ENCODE measurements at regions of chr3 and their contacts with region 1.

Region 1: GRCh38 chr3:187164885-187165543 is 25.7 kb upstream of the RPL39L start:
- DNase-seq: peak in 1 of 3 donors; percentile 60
- ATAC-seq: peak; percentile 56
- H3K4me3 ChIP-seq: no peak overlapping the region
- H3K4me1 ChIP-seq: no peaks in the 10 kb centered on the region
- CTCF ChIP-seq: peak; percentile 59

Region 2: DNA sequence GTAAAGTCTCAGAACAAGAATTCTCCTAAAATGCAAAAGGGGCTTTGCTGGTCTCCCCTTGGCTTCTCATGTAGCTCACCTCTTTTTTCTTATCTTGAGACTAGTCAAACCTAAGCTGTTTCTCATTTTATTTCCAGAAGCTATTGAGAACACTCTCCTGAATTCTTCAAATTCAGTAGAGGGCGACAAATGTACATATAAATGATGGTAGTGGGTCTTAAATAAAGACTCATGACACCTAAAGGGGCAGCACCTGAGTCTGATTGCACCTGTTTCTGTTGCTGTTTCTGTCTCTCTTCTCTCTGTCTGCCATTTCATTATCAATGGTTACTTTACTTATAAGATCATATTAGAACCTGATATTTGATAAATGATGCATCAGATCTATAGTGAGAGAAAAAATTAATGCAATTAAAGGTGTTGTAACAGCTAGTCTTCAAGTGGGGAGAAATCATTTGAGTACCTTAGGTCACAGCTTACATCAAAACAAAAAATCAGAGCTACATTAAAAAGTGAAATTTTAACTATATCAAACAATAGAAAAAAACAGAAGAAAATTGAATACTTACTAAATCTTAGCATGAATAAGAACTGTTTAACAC is 315.5 kb before region 1 on chr3:
- intact Hi-C with region 1: loop called in 1 of 2 experiments (anchors 10 kb)
- DNase-seq: no peak
- ATAC-seq: peak; percentile 40
- H3K4me3 ChIP-seq: no peak overlapping the region
- H3K4me1 ChIP-seq: no peaks in the 10 kb centered on the region
- CTCF ChIP-seq: no peak

Region 3: GRCh38 chr3:187066228-187066995 is 98.6 kb before region 1 on chr3:
- intact Hi-C with region 1: no loop called
- DNase-seq: peak in 1 of 3 donors; percentile 43
- ATAC-seq: peak; percentile 67
- H3K4me3 ChIP-seq: no peak overlapping the region
- H3K4me1 ChIP-seq: no peaks in the 10 kb centered on the region
- CTCF ChIP-seq: no peak

Region 4: GRCh38 chr3:187112934-187113793 is 51.9 kb before region 1 on chr3:
- intact Hi-C with region 1: loop called in 1 of 2 experiments (anchors 5 kb)
- DNase-seq: peak in 1 of 3 donors; percentile 12
- ATAC-seq: no peak
- H3K4me3 ChIP-seq: no peak overlapping the region
- H3K4me1 ChIP-seq: no peaks in the 10 kb centered on the region
- CTCF ChIP-seq: peak; percentile 35

Region 5: GRCh38 chr3:187125319-187126031 is 39.5 kb before region 1 on chr3:
- intact Hi-C with region 1: no loop called
- DNase-seq: no peak
- ATAC-seq: peak; percentile 24
- H3K4me3 ChIP-seq: no peak overlapping the region
- H3K4me1 ChIP-seq: no peaks in the 10 kb centered on the region
- CTCF ChIP-seq: no peak